Esophagus squamous epithelium (tissue), 5 donors: ENCODE measurements at regions of chr6 and their contacts with region 1.

Region 1: GRCh38 chr6:44074439-44075136 is 52.7 kb downstream of the MRPL14 start:
- DNase-seq: no peak
- H3K4me3 ChIP-seq: peak overlapping the region in 3 of 4 donors; percentile 52 to 71 (median 54)
- H3K27ac ChIP-seq: peak overlapping the region; percentile 56 to 83 (median 80)
- H3K4me1 ChIP-seq: peaks cover 37 to 78% (median 44%) of the 10 kb centered on the region in 3 donors
- H3K27me3 ChIP-seq: peaks cover 0 to 13% (median 0%) of the 10 kb centered on the region in 4 donors
- CTCF ChIP-seq: peak; percentile 85 to 97 (median 91)
- POLR2A ChIP-seq: no peak

Region 2: DNA sequence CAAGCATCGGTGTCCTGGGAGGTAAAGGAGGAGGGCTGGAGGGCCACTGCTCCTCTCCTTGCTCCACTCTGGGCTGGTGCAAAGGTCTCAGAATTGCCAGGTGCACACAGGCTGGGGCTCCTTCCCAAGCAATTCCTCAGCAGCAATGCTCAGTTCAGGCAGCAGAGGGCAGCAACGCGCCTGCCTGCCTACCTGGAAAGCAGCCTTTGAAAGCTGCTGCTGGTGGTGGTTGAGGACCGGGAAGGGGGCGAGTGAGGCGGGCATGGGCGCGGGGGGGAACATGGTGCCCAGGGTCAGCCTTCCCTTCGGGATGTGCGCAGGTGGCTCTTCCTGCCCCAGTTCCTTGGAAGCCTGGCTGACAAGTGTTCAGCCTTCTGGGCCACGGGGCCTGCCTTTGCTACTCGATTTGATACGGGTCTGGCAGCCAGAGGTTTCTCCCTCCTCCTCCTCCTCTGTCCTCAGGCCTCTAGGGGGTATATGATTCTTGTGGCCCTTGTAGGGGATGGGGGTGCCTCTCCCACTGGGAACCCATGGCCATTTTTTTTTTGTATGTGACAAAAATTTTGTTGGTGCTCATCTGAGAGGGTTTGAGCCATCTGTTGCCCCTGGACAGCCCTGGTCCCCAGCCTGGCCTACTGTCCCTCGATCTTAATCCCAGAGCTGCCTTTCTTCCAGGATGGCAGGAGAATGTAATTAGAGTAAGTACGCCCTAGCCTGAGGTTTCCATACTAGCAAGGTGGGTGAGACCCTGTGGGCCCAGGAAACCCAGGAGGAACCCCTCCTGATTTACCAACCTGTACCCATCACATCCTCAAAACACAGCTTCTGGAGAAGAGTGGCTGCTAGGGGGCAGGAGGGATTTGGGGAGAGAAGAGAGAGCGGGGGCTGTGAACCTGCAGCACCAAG is 407.1 kb before region 1 on chr6:
- intact Hi-C with region 1: loop called (anchors 5 kb)
- DNase-seq: no peak
- H3K4me3 ChIP-seq: peak overlapping the region in 1 of 4 donors; percentile 42
- H3K27ac ChIP-seq: peak overlapping the region; percentile 10 to 84 (median 73)
- H3K4me1 ChIP-seq: peaks cover 29 to 56% (median 39%) of the 10 kb centered on the region in 3 donors
- H3K27me3 ChIP-seq: no peaks in the 10 kb centered on the region
- CTCF ChIP-seq: peak; percentile 92 to 97 (median 95)
- POLR2A ChIP-seq: no peak

Region 3: DNA sequence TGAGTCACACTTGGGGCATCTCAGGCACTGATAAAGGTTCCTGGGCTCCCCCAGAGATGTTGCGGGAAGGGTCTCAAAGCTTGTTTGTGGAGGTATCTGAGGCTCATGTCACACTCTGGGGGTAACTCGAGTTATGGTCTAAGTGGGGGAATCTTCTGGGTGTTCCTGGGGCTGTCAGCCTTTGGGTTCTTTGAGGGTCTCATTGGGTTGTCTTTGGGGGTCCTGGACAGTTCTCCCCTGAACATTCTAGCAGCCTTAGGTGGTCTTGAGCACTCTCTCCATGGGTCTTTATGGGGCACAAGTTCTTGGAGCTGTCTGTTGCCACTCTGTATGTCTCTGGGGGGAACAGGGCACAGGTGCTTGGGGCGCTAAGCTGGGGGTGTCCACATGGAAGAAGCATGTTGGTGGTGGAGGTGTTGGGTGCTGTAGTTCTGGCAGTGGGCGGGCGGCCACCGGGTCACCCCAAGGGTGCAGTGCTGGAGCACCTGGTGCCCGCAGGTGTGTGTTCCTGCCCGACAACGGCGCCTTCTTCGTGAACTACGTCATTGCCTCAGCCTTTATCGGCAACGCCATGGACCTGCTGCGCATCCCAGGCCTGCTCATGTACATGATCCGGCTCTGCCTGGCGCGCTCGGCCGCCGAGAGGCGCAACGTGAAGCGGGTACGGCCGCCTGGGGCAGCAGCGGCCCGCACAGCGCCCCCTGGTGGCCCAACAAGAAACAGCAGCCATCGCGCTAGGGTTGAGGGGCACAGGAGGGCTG is 76.9 kb after region 1 on chr6:
- intact Hi-C with region 1: no loop called
- DNase-seq: no peak
- H3K4me3 ChIP-seq: peak overlapping the region in 1 of 4 donors; percentile 24
- H3K27ac ChIP-seq: no peak overlapping the region
- H3K4me1 ChIP-seq: peaks cover 0 to 7% (median 0%) of the 10 kb centered on the region in 3 donors
- H3K27me3 ChIP-seq: no peaks in the 10 kb centered on the region
- CTCF ChIP-seq: peak; percentile 96 to 99 (median 99)
- POLR2A ChIP-seq: no peak

Region 4: DNA sequence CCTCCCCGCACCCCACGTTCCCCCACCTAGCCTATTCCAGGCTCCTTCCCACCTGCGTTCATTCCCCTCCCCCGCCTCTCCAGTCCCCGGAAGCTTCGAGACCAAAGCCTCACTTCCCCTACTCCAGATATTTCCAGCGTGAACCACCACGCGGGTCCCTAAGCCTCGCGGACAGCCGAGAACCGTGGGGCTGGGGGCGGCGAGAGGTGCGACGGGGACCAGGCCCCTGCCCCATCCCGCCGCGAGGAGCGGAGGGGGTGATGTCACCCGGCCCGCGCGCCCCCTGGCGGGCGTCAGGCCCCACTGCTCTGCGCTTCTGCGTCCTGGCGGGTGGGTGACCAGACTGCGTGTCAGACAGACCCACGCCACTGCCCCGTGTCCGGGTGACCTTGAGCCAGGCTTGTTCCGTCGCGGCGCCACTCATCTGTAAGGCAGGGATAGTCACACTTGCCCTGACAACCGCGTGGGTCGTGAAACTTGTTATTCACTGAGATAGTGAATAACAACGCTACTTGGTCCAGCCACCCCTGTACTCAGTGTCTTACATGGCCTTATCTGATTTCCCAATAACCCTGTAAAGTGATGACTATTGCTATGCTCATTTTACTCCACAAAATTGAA is 163.3 kb after region 1 on chr6:
- intact Hi-C with region 1: no loop called
- DNase-seq: no peak
- H3K4me3 ChIP-seq: peak overlapping the region; percentile 43 to 89 (median 65)
- H3K27ac ChIP-seq: peak overlapping the region; percentile 87 to 99 (median 96)
- H3K4me1 ChIP-seq: peaks cover 6 to 53% (median 38%) of the 10 kb centered on the region in 3 donors
- H3K27me3 ChIP-seq: no peaks in the 10 kb centered on the region
- CTCF ChIP-seq: peak; percentile 95 to 99 (median 98)
- POLR2A ChIP-seq: peak in 2 of 4 donors; percentile 32 to 44